Spleen (tissue), 13 donors: ENCODE measurements at regions of chr19 and their contacts with region 1.

Region 1: GRCh38 chr19:36528194-36528920 is at the start of gene ZNF260:
- DNase-seq: peak; percentile 97
- H3K4me3 ChIP-seq: peak within 1 kb of the TSS; percentile 54 to 90 (median 66)
- H3K27ac ChIP-seq: peak within 1 kb of the TSS; percentile 87 to 94 (median 92)
- H3K4me1 ChIP-seq: peaks cover 0 to 29% (median 26%) of the 10 kb centered on the region in 6 donors
- H3K27me3 ChIP-seq: no peaks in the 10 kb centered on the region
- CTCF ChIP-seq: peak in 2 of 11 experiments; percentile 10 to 25
- POLR2A ChIP-seq: peak in 1 of 3 donors; percentile 29
- total RNA-seq, gene ZNF260: 8.7 to 14.8 (median 12.4) TPM

Region 2: DNA sequence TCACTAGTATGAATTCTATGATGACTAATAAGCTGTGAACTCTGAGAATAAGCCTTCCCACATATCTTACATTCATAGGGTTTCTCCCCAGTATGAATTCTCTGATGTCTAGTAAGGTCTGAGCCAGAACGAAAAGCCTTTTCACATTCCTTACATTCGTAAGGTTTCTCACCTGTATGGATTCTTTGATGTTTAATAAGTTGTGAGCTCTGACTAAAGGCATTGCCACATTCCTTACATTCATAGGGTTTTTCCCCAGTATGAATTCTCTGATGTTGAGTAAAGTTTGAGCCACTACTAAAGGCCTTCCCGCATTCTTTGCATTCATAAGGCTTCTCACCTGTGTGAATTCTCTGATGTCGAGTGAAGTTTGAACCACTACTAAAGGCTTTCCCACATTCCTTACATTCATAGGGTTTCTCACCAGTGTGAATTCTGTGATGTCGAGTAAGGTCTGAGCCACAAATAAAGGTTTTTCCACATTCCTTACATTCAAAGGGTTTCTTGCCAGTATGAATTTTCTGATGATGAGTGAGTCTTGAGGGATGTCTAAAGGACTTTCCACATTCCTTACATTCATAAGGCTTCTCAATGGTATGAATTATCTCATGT is 79.2 kb before region 1 on chr19:
- intact Hi-C with region 1: no loop called
- DNase-seq: no peak
- H3K4me3 ChIP-seq: peak overlapping the region in 1 of 8 donors; percentile 11
- H3K27ac ChIP-seq: no peak overlapping the region
- H3K4me1 ChIP-seq: no peaks in the 10 kb centered on the region
- H3K27me3 ChIP-seq: no peaks in the 10 kb centered on the region
- CTCF ChIP-seq: no peak
- POLR2A ChIP-seq: no peak

Region 3: GRCh38 chr19:36573020-36573885 is 44.9 kb after region 1 on chr19 and contains the start of gene ZNF529:
- intact Hi-C with region 1: loop called (anchors 5 kb)
- DNase-seq: peak; percentile 95
- H3K4me3 ChIP-seq: peak within 1 kb of the TSS; percentile 36 to 91 (median 81)
- H3K27ac ChIP-seq: peak within 1 kb of the TSS; percentile 75 to 96 (median 90)
- H3K4me1 ChIP-seq: peaks cover 8 to 32% (median 27%) of the 10 kb centered on the region in 6 donors
- H3K27me3 ChIP-seq: no peaks in the 10 kb centered on the region
- CTCF ChIP-seq: no peak
- POLR2A ChIP-seq: peak in 1 of 3 donors; percentile 56
- total RNA-seq, gene ZNF529: 10.1 to 19.4 (median 14.2) TPM